Esophagus squamous epithelium (tissue), 5 donors: ENCODE measurements at regions of chr3 and their contacts with region 1.

Region 1: DNA sequence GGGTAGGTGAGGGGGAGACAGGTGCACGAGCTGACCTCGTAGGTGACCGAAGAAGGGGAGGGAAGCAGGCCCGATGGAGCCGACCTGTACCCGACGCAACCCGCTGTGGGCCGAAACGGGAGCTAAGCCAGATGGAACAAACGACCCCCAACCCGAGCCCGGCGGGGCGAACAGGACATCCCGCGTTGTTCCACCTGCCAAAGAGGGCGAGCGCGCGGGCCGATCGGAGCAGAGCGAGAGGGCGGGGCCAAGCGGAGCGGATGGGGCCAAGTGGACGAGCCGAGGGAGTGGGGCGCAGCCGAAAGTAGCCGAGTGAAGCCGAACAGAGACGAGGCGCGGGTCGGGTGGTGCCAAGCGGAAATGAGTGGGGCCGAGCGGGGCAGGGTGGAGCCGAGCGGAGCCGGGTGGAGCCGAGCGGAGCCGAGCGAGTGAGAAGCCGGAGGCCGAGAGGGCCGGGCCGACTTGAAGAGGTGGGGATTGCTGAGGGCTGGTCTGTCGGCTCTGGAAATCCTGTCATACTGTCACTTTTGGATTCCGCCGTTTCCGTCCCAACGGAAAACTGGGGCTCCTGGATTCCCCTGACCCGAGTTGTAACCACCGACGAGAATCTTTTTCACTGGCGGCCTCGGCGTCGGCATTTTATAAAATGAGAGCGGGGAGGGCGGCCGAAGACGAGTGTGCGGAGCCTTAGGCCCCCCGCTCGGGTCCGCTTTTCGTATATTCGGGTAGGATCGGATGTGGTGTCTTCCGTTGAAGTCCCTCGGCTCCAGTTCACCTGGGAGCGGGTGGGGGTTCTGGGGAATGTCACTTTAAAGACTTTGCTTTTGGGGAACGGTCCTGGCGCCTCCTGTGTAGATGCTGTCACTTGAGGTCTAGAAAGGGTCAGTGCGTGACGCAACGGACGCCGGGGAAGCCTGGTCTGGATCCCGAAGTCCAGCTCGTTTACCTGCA is 15.6 kb upstream of the WNT7A start:
- DNase-seq: peak; percentile 55
- H3K4me3 ChIP-seq: peak overlapping the region; percentile 46 to 73 (median 64)
- H3K27ac ChIP-seq: peak overlapping the region; percentile 59 to 84 (median 78)
- H3K4me1 ChIP-seq: peaks cover 6 to 36% (median 11%) of the 10 kb centered on the region in 3 donors
- H3K27me3 ChIP-seq: no peaks in the 10 kb centered on the region
- CTCF ChIP-seq: no peak
- POLR2A ChIP-seq: peak in 3 of 4 donors; percentile 69 to 87 (median 75)

Region 2: DNA sequence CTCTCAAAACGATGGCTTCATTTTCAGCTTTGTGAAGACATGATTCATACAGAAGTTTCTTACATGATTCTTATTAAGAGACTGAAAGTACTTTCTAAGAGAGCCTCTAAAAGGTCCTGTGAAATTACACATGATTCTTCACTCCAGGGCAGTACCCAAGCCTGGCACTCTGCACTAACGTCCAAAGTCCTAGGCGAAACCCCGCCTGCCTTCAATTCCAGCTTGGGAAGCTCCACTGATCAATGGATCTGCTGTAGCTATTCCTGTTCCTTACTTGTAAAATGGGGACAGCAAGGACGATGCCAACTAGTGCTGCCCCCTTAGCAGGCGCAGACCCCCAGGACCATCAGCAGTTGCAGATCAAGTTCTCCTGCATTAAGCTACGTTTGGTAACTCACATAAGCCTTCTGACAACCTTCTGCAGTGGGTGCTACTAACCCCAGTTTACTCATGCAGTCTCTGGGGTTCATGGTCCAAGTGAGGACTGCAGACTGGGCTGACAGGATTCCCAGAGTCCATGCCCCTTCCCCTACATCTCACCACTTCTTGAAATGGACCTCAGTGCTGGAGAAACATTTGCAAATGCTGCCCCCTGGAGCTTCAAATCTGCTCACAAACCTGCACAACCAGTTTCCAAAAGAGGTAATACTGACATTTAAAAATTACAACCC is 218.7 kb after region 1 on chr3:
- intact Hi-C with region 1: loop called (anchors 10 kb)
- DNase-seq: no peak
- H3K4me3 ChIP-seq: no peak overlapping the region
- H3K27ac ChIP-seq: no peak overlapping the region
- H3K4me1 ChIP-seq: peaks cover 4 to 33% (median 11%) of the 10 kb centered on the region in 3 donors
- H3K27me3 ChIP-seq: no peaks in the 10 kb centered on the region
- CTCF ChIP-seq: peak in 3 of 6 experiments; percentile 25 to 50 (median 45)
- POLR2A ChIP-seq: no peak

Region 3: GRCh38 chr3:14178247-14179113 is 283.1 kb after region 1 on chr3 and contains the starts of genes LSM3 and XPC:
- intact Hi-C with region 1: loop called (anchors 10 kb)
- DNase-seq: peak; percentile 87
- H3K4me3 ChIP-seq: peak within 1 kb of the TSS; percentile 72 to 93 (median 81)
- H3K27ac ChIP-seq: peak within 1 kb of the TSS; percentile 93 to 98 (median 97)
- H3K4me1 ChIP-seq: peaks cover 11 to 82% (median 45%) of the 10 kb centered on the region in 3 donors
- H3K27me3 ChIP-seq: no peaks in the 10 kb centered on the region
- CTCF ChIP-seq: peak in 1 of 6 experiments; percentile 12
- POLR2A ChIP-seq: peak in 3 of 4 donors; percentile 72 to 97 (median 97)
- total RNA-seq, gene LSM3: 6.3 to 21.5 (median 13.7) TPM
- total RNA-seq, gene XPC: 14.4 to 47.9 (median 30.0) TPM